Heart right ventricle (tissue), 16 donors: ENCODE measurements at regions of chr14 and their contacts with region 1.

Region 1: GRCh38 chr14:67666750-67667449 is 7.5 kb downstream of the VTI1B start:
- DNase-seq: peak in 1 of 2 donors; percentile 19
- ATAC-seq: peak; percentile 61 to 85 (median 66)
- H3K4me3 ChIP-seq: no peak overlapping the region
- H3K27ac ChIP-seq: no peak overlapping the region
- H3K4me1 ChIP-seq: peaks cover 0 to 21% (median 4%) of the 10 kb centered on the region in 9 donors
- H3K27me3 ChIP-seq: no peaks in the 10 kb centered on the region
- CTCF ChIP-seq: peak in 8 of 9 donors; percentile 29 to 71 (median 61)

Region 2: GRCh38 chr14:67589204-67589770 is 77.6 kb before region 1 on chr14:
- intact Hi-C with region 1: no loop called
- DNase-seq: no peak
- ATAC-seq: no peak
- H3K4me3 ChIP-seq: no peak overlapping the region
- H3K27ac ChIP-seq: no peak overlapping the region
- H3K4me1 ChIP-seq: no peaks in the 10 kb centered on the region
- H3K27me3 ChIP-seq: no peaks in the 10 kb centered on the region
- CTCF ChIP-seq: no peak

Region 3: DNA sequence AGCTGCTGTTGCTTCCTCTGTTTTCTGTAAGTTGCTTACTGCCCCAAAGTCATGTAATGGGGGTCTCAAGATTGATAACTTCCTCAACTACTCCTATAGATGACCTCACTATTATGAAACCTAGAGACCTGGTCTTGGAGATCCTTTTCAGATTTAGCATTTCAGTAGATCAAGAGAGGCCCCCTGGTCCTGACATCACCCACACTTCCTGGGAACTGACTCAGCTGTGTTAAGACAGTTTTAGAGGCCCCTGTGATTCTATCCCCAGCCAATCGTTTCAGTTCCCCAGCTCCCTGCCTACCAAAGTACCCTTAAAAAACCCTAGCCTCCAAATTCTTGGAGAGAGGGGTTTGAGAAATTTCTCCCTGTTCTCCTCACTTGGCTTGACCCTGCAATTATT is 56.4 kb before region 1 on chr14:
- intact Hi-C with region 1: loop called in 3 of 10 experiments (anchors 5 kb)
- DNase-seq: no peak
- ATAC-seq: no peak
- H3K4me3 ChIP-seq: no peak overlapping the region
- H3K27ac ChIP-seq: no peak overlapping the region
- H3K4me1 ChIP-seq: no peaks in the 10 kb centered on the region
- H3K27me3 ChIP-seq: peaks cover 0 to 13% (median 0%) of the 10 kb centered on the region in 7 donors
- CTCF ChIP-seq: no peak

Region 4: GRCh38 chr14:67619446-67620216 is 47.3 kb before region 1 on chr14 and contains the start of gene ARG2:
- intact Hi-C with region 1: loop called (anchors 1 to 5 kb)
- DNase-seq: peak; percentile 95 to 97
- ATAC-seq: peak; percentile 97 to 99 (median 99)
- H3K4me3 ChIP-seq: peak within 1 kb of the TSS; percentile 36 to 74 (median 68)
- H3K27ac ChIP-seq: peak within 1 kb of the TSS in 5 of 10 donors; percentile 16 to 55 (median 54)
- H3K4me1 ChIP-seq: peaks cover 0 to 36% (median 12%) of the 10 kb centered on the region in 9 donors
- H3K27me3 ChIP-seq: peaks cover 0 to 5% (median 0%) of the 10 kb centered on the region in 7 donors
- CTCF ChIP-seq: peak in 3 of 9 donors; percentile 21 to 31 (median 28)
- total RNA-seq, gene ARG2: 0.69 to 11.6 (median 1.5) TPM

Region 5: GRCh38 chr14:67704484-67705089 is 37.7 kb after region 1 on chr14:
- intact Hi-C with region 1: no loop called
- DNase-seq: peak in 1 of 2 donors; percentile 16
- ATAC-seq: peak in 7 of 8 donors; percentile 58 to 85 (median 77)
- H3K4me3 ChIP-seq: no peak overlapping the region
- H3K27ac ChIP-seq: no peak overlapping the region
- H3K4me1 ChIP-seq: peaks cover 0 to 4% (median 0%) of the 10 kb centered on the region in 9 donors
- H3K27me3 ChIP-seq: no peaks in the 10 kb centered on the region
- CTCF ChIP-seq: peak; percentile 45 to 87 (median 76)